PC-9 (cell line): ENCODE measurements at regions of chr5 and their contacts with region 1.

Region 1: DNA sequence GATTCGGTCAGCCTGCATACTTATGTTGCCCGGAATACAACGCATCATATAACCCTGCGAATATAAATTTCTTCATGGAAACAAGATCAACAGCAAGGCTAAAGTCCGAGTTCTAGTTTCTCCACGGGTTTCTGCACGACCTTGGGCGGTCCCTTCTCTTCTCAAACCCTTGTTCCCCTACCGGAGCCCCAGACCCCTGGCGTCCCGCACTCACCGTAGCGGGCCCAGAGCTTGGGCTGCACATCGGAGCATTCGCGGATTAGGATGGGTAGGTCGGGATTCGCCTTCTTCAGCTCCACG is 438 bp downstream of the NDUFA2 start:
- DNase-seq: no peak
- H3K4me3 ChIP-seq: peak overlapping the region; percentile 84
- H3K27ac ChIP-seq: no peak overlapping the region
- H3K4me1 ChIP-seq: peaks cover 14% of the 10 kb centered on the region
- H3K27me3 ChIP-seq: no peaks in the 10 kb centered on the region
- CTCF ChIP-seq: no peak

Region 2: DNA sequence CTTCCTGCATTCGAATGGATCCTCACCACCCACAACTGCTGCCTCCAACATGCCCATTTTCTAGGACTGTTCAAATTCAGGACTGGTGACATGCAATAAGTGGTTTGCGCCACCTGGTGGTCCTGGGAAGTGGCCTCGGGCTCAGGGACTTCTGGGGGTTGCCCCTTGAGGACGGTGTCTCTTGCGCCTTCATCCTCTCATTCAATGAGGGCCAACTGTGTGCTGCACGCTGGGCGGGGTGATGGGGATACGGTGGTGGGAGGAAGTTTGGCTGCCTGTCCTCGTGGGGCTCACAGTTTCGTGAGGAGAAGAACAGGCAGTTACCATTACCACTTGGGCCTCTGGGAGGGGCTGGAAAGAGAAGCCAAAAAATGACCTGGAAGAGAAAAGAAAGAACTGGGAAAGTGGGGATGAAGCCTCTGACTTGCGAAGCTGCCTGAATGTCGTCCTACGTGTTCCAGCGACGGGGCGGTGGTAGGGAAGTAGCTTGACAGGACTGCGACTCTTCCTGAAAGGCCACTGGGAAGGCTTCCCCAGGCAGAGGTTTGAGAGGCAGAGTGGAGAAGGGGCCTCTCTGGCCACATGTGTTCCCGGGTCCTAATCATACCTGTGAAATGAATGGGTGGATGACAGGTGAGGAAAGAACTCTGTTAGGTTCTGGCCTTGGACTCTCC is 802.4 kb before region 1 on chr5:
- CTCF ChIA-PET with region 1: no interaction called
- POLR2A ChIA-PET with region 1: no interaction called
- intact Hi-C with region 1: no loop called
- DNase-seq: peak; percentile 44 to 48
- H3K4me3 ChIP-seq: no peak overlapping the region
- H3K27ac ChIP-seq: no peak overlapping the region
- H3K4me1 ChIP-seq: no peaks in the 10 kb centered on the region
- H3K27me3 ChIP-seq: peaks cover 7% of the 10 kb centered on the region; the same call in 1 of the 2 replicates
- CTCF ChIP-seq: peak; percentile 70

Region 3: DNA sequence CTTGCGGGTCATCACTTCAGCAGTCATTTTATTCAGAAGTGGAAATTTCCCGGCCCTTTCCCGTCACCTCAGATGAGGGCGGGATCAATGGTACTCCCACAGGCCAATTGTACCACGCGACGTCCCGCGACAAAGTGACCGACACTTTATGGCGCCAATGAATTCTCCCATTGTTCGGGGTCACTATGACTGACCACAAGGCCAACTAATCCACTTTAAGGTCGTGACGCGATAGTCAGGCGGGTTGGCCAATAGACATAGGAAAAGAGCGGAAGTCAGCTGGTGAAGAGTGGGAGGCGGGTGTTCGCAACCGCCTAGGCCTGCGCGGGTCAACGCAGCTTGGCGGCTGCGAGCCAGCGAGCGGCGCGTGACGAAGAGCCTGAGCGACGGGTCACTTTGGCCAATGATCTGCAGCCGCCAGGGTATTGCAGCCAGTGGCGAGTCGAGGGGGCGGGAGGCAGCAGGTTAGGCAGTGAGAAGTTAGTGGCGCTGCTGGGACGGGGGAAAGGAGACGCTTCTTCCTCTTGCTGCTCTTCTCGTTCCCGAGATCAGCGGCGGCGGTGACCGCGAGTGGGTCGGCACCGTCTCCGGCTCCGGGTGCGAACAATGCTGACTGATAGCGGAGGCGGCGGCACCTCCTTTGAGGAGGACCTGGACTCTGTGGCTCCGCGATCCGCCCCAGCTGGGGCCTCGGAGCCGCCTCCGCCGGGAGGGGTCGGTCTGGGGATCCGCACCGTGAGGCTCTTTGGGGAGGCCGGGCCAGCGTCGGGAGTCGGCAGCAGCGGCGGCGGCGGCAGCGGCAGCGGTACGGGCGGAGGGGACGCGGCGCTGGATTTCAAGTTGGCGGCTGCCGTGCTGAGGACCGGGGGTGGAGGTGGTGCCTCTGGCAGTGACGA is 245.4 kb before region 1 on chr5 and contains the start of gene ANKHD1:
- CTCF ChIA-PET with region 1: no interaction called
- POLR2A ChIA-PET with region 1: interaction called, 9 read pairs
- intact Hi-C with region 1: loop called (anchors 2 kb)
- DNase-seq: peak; percentile 98 to 99
- H3K4me3 ChIP-seq: peak within 1 kb of the TSS; percentile 89
- H3K27ac ChIP-seq: peak within 1 kb of the TSS; percentile 83
- H3K4me1 ChIP-seq: peaks cover 37% of the 10 kb centered on the region
- H3K27me3 ChIP-seq: no peaks in the 10 kb centered on the region
- CTCF ChIP-seq: no peak
- total RNA-seq, gene ANKHD1: 90.7 and 109 TPM in 2 replicates

Region 4: DNA sequence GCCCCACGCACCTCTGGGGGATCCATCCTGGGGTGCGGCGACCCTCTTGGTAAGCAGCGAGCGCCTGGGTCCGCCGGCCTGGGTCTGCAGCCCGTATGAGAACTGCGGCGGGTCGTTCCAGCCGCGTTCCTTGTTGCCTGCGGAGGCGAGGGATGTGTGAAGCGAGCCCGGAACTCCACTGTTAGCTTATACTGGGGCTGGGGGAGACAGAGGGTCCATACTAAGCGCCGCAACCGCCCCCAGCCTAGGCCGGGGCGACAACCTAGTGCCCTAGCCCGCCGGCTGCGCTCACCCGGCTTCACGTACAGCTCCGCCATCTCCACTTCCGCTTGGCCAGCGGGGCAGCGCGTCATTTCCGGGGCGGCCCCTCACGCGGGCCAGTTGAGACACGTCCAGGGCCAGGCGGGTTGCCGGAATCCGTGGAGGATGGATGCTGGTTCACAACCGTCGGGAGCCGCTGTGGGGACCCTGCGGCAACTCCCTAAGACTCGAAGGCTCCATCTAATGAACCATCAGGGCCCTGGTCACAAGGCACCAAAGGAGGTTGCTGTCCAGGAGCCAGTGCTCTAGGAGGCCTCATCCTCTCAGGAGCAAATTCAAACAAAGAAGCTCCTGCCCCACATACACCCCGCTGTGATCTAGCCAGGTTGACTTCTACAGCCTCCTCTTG is 89.7 kb before region 1 on chr5 and contains the start of gene SRA1:
- CTCF ChIA-PET with region 1: no interaction called
- POLR2A ChIA-PET with region 1: no interaction called
- intact Hi-C with region 1: loop called (anchors 2 kb)
- DNase-seq: peak; percentile 78 to 89
- H3K4me3 ChIP-seq: peak within 1 kb of the TSS; percentile 73
- H3K27ac ChIP-seq: peak within 1 kb of the TSS; percentile 39; the same call in 1 of the 2 replicates
- H3K4me1 ChIP-seq: peaks cover 10% of the 10 kb centered on the region
- H3K27me3 ChIP-seq: no peaks in the 10 kb centered on the region
- CTCF ChIP-seq: no peak
- total RNA-seq, gene SRA1: 30.5 and 36.1 TPM in 2 replicates

Region 5: DNA sequence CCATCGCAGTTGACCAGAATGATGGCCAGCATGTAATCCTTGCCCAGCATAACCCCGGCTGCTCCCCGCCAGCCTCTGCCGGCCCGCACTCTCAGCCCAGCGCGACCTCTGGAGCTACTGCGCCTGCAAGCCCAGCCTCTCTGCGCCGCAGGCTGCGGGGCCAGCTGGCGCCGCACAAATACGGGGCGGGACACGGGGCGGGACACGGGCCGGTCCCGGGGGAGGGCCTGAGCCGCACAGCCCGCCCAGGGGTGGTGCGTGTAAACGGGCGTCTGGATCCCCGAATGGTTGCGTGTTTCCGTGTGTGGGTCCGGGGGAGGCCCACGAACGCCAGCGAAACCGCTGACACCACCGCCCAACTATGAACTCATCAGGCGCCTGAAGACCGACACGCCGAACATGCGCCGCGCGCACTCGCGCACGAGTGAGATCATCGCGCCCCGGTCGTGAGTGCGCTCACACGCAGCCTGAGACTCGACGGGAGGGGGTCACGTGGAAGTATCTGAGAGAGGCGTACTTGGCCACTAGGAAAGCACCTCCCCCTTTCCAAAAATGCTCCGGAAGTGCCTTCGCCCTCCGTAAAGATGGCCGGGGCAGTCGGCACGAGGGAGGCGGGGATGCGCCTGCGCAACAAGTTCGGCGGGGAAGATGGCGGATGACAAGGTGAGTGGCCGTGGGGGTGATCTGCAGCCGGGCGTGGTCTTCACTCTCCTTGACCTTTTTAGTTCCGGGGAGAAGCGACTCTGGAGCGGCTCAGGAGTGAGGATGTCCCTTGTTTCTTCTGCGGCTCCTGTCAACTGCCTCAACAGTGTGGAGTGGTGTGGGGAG is 82.6 kb before region 1 on chr5 and contains the starts of genes APBB3 and SLC35A4:
- CTCF ChIA-PET with region 1: no interaction called
- POLR2A ChIA-PET with region 1: no interaction called
- intact Hi-C with region 1: loop called (anchors 2 kb)
- DNase-seq: peak; percentile 87 to 92
- H3K4me3 ChIP-seq: peak within 1 kb of the TSS; percentile 76
- H3K27ac ChIP-seq: peak within 1 kb of the TSS; percentile 56
- H3K4me1 ChIP-seq: peaks cover 14% of the 10 kb centered on the region
- H3K27me3 ChIP-seq: no peaks in the 10 kb centered on the region
- CTCF ChIP-seq: no peak
- total RNA-seq, gene APBB3: 23.4 and 26.0 TPM in 2 replicates
- total RNA-seq, gene SLC35A4: 44.2 and 66.2 TPM in 2 replicates

Region 6: DNA sequence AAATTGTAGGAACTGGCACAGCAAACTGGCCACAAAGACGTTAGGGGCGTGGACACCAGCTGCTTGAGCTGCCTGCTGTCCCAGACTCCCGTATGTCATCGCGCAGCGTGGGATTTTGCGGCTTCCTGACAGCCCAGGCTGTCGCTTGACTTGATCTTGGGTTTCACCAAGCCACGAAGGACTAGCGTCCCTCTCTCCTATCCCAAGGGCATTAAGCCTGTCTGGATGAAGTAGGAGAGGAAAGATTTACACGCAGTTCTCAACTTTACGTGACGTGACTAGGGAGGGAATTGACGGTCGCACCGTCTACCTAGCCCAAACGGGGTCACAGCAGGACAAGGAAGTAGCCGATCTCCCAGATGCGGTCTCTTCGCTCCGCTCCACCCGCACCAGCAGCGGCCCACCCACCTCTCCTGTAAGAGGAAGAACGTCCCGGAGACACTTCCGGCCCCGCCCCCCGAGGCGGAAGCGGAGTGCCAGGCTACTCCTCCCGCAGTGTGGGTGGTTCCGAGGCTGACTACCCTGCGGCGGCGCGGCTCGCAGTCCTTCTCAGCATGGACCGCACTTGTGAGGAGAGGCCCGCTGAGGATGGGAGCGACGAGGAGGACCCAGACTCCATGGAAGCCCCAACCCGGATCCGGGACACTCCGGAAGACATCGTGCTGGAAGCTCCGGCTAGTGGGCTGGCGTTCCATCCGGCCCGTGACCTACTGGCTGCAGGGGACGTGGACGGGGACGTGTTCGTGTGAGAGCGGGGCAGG is 17.5 kb after region 1 on chr5 and contains the start of gene WDR55:
- CTCF ChIA-PET with region 1: interaction called, 4 read pairs
- POLR2A ChIA-PET with region 1: interaction called, 34 read pairs
- intact Hi-C with region 1: no loop called
- DNase-seq: peak; percentile 91 to 95
- H3K4me3 ChIP-seq: peak within 1 kb of the TSS; percentile 87
- H3K27ac ChIP-seq: peak within 1 kb of the TSS; percentile 69
- H3K4me1 ChIP-seq: peaks cover 13% of the 10 kb centered on the region
- H3K27me3 ChIP-seq: no peaks in the 10 kb centered on the region
- CTCF ChIP-seq: no peak
- total RNA-seq, gene WDR55: 37.9 and 39.2 TPM in 2 replicates